Heart right ventricle (tissue), 16 donors: ENCODE measurements at regions of chr2 and their contacts with region 1.

Region 1: GRCh38 chr2:234881413-234882241 is 70.2 kb upstream of the SH3BP4 start:
- DNase-seq: peak; percentile 79 to 91
- ATAC-seq: peak; percentile 90 to 99 (median 98)
- H3K4me3 ChIP-seq: peak overlapping the region in 5 of 10 donors; percentile 19 to 36 (median 26)
- H3K27ac ChIP-seq: peak overlapping the region in 5 of 10 donors; percentile 28 to 55 (median 30)
- H3K4me1 ChIP-seq: peaks cover 0 to 32% (median 19%) of the 10 kb centered on the region in 9 donors
- H3K27me3 ChIP-seq: no peaks in the 10 kb centered on the region
- CTCF ChIP-seq: peak; percentile 59 to 90 (median 81)

Region 2: DNA sequence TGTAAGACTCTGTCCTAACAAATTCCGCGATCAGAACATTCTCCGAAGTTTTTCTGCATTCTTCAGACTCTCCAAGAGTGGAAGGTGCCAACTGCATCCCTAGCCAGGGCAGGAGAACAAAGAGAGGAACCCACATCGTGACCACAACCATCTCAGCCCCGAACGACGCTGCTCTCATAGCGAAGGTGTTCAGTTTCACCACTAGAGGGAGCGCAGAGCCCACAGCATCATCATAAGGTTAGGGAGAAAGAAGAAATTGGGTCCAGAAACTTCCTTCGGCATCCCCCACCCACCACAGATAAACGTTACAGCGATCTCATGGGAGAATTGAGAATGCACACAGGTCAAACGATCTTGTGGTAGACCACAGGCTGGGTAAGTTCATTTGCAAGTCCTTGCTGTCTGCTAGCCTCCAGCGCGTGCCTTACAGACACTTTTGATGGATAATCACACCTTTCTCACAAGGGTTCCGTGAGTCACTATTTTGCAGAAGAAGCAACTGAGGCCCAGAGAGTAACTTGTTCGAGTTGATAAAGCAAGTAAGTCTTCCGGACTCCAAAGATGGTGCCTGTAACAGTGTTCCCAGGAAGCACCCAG is 331.0 kb before region 1 on chr2:
- intact Hi-C with region 1: loop called in 2 of 10 experiments (anchors 5 to 10 kb)
- DNase-seq: peak; percentile 48 to 64
- ATAC-seq: peak in 7 of 8 donors; percentile 69 to 88 (median 80)
- H3K4me3 ChIP-seq: no peak overlapping the region
- H3K27ac ChIP-seq: no peak overlapping the region
- H3K4me1 ChIP-seq: peaks cover 0 to 8% (median 0%) of the 10 kb centered on the region in 9 donors
- H3K27me3 ChIP-seq: peaks cover 0 to 17% (median 7%) of the 10 kb centered on the region in 7 donors
- CTCF ChIP-seq: peak; percentile 82 to 98 (median 95)

Region 3: GRCh38 chr2:234661175-234661574 is 220.5 kb before region 1 on chr2:
- intact Hi-C with region 1: no loop called
- DNase-seq: no peak
- ATAC-seq: no peak
- H3K4me3 ChIP-seq: no peak overlapping the region
- H3K27ac ChIP-seq: no peak overlapping the region
- H3K4me1 ChIP-seq: no peaks in the 10 kb centered on the region
- H3K27me3 ChIP-seq: no peaks in the 10 kb centered on the region
- CTCF ChIP-seq: no peak

Region 4: DNA sequence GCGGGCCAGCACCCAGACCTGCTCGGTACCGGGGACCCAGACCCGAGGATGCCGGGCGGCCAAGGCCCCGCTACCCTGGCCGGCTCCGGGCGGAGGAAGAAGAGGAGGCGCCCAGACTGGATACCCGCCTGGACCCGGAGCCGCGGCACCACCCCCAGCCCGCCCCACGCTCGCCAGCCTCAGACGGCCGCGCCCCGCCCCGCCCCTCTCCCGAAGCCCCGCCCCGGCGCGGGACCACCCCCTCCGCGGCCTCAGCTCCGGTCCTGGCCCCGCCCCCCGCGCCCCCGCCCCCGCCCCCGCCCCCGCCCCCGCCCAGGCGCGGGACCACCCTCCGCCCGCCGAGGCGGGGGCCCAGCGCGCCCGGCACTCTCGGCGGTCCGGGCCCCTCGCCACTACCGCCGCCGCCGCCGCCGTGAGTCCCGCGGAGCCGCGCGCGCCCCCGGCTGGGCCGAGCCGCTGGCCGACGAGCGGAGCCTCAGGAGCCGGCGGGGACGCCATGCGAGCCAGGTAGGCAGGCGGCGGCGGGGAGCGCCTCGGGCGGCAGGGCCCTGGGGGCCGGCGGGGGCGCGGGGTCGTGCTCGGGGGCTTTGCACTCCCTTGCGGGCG is 70.1 kb after region 1 on chr2 and contains the start of gene SH3BP4:
- intact Hi-C with region 1: loop called in 2 of 10 experiments (anchors 1 to 5 kb)
- DNase-seq: peak; percentile 83 to 88
- ATAC-seq: peak; percentile 79 to 92 (median 88)
- H3K4me3 ChIP-seq: peak within 1 kb of the TSS; percentile 64 to 95 (median 85)
- H3K27ac ChIP-seq: peak within 1 kb of the TSS; percentile 69 to 92 (median 84)
- H3K4me1 ChIP-seq: peaks cover 3 to 45% (median 38%) of the 10 kb centered on the region in 9 donors
- H3K27me3 ChIP-seq: peaks cover 0 to 42% (median 0%) of the 10 kb centered on the region in 7 donors
- CTCF ChIP-seq: no peak
- total RNA-seq, gene SH3BP4: 6.3 to 14.2 (median 10.8) TPM

Region 5: DNA sequence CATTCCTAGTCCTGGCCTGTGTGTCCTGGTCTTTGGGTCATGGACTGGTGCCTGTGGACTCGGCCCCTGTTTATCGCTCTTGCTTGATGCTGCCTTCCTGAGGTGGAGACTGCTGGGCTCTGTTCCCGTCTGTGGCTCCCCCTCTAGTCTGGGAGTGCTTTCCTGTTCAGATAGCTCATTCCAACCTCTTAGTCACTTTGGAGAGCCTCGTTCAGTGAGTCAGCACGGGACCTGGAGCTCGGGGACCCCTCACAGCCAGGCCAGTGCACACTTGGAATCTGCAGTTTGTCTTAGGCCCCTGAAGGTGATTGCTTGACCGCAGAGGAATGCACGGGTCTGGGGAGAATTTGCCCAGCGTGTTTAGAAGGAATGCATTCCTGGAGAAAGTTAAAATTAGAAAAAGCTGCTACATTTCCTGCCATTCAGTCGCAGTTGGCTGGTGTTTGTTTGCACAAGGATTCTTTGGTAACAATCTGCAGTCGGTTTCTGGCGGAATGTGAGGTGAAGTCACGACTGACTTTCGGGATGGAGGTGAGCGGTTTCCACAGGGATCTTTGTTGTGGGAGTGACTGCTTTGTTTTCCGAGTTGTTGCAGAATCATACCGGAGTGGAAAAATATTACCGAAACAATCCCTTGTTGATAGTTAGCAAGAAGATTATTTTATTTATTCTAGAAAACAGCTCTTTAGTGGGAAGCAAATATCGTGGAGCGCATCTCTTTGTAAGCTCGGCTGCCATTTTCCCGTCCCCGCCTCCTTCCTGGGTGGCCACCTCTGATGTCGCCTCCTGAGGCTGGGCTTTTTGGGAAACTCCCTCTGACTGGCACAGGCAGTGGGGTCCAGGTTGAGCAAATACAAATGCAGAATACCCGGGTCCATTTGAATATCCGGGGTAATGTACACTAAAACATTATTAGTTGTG is 99.8 kb after region 1 on chr2:
- intact Hi-C with region 1: loop called in 2 of 10 experiments (anchors 2 to 10 kb)
- DNase-seq: peak; percentile 64 to 77
- ATAC-seq: peak; percentile 74 to 95 (median 90)
- H3K4me3 ChIP-seq: peak overlapping the region in 8 of 10 donors; percentile 12 to 44 (median 30)
- H3K27ac ChIP-seq: peak overlapping the region in 9 of 10 donors; percentile 61 to 87 (median 81)
- H3K4me1 ChIP-seq: peaks cover 19 to 97% (median 60%) of the 10 kb centered on the region in 9 donors
- H3K27me3 ChIP-seq: no peaks in the 10 kb centered on the region
- CTCF ChIP-seq: peak in 3 of 9 donors; percentile 25 to 31 (median 26)

Region 6: GRCh38 chr2:235050992-235051351 is 169.3 kb after region 1 on chr2:
- intact Hi-C with region 1: loop called in 2 of 10 experiments (anchors 5 kb)
- DNase-seq: peak; percentile 91 to 94
- ATAC-seq: peak; percentile 87 to 96 (median 92)
- H3K4me3 ChIP-seq: peak overlapping the region in 1 of 10 donors; percentile 26
- H3K27ac ChIP-seq: peak overlapping the region; percentile 44 to 88 (median 71)
- H3K4me1 ChIP-seq: peaks cover 13 to 50% (median 43%) of the 10 kb centered on the region in 9 donors
- H3K27me3 ChIP-seq: no peaks in the 10 kb centered on the region
- CTCF ChIP-seq: peak in 5 of 9 donors; percentile 10 to 47 (median 37)

Region 7: DNA sequence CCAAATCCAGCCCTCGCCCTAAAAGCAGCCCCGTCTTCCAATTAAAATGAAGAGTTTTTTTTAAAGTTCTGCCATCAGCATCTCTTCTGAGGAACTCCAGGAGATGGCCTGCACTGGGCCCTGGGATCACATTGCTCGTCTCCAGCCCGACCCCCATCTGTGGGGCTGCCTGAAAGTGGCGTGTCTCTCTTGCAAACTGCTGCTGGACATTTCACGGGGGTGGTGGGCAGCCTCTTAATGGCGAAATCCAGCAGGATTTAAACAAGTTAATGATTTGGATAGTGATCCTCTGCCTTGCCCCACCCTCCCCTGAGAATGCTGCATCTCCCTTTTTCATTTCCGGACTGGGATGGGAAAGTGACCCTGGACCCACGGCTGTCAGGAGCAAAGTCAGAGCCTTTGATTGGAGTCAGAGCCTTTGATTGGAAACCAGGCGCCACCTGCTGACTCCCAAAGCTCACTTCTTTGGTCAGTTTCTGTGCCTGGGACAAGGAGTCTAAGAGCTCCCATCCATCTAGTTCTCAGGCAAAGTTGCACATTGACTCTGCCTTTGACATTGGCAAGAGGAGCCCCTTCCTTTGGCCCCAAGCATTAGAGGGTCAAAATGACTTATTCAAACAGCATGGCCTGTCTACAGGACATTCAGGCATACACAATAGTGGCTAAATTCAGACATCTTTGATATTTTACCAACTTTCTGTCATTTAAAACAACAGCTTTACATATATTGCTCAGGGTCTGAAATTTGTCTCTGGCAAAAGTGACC is 225.4 kb after region 1 on chr2:
- intact Hi-C with region 1: loop called in 7 of 10 experiments (anchors 5 to 10 kb)
- DNase-seq: peak; percentile 51 to 69
- ATAC-seq: peak; percentile 58 to 91 (median 82)
- H3K4me3 ChIP-seq: no peak overlapping the region
- H3K27ac ChIP-seq: no peak overlapping the region
- H3K4me1 ChIP-seq: peaks cover 0 to 11% (median 3%) of the 10 kb centered on the region in 9 donors
- H3K27me3 ChIP-seq: no peaks in the 10 kb centered on the region
- CTCF ChIP-seq: peak; percentile 49 to 85 (median 67)